Adrenal gland (tissue), 19 donors: ENCODE measurements at regions of chr12 and their contacts with region 1.

Region 1: GRCh38 chr12:64256166-64256800 is 34.2 kb upstream of the KICS2 start:
- DNase-seq: no peak
- H3K4me3 ChIP-seq: no peak overlapping the region
- H3K27ac ChIP-seq: no peak overlapping the region
- H3K4me1 ChIP-seq: peaks cover 6 to 12% of the 10 kb centered on the region in 2 donors
- H3K27me3 ChIP-seq: no peaks in the 10 kb centered on the region
- CTCF ChIP-seq: peak; percentile 66 to 88 (median 84)
- POLR2A ChIP-seq: no peak

Region 2: GRCh38 chr12:63836936-63837335 is 419.3 kb before region 1 on chr12:
- intact Hi-C with region 1: loop called (anchors 2 to 5 kb)
- DNase-seq: no peak
- H3K4me3 ChIP-seq: no peak overlapping the region
- H3K27ac ChIP-seq: no peak overlapping the region
- H3K4me1 ChIP-seq: no peaks in the 10 kb centered on the region
- H3K27me3 ChIP-seq: no peaks in the 10 kb centered on the region
- CTCF ChIP-seq: no peak
- POLR2A ChIP-seq: no peak

Region 3: DNA sequence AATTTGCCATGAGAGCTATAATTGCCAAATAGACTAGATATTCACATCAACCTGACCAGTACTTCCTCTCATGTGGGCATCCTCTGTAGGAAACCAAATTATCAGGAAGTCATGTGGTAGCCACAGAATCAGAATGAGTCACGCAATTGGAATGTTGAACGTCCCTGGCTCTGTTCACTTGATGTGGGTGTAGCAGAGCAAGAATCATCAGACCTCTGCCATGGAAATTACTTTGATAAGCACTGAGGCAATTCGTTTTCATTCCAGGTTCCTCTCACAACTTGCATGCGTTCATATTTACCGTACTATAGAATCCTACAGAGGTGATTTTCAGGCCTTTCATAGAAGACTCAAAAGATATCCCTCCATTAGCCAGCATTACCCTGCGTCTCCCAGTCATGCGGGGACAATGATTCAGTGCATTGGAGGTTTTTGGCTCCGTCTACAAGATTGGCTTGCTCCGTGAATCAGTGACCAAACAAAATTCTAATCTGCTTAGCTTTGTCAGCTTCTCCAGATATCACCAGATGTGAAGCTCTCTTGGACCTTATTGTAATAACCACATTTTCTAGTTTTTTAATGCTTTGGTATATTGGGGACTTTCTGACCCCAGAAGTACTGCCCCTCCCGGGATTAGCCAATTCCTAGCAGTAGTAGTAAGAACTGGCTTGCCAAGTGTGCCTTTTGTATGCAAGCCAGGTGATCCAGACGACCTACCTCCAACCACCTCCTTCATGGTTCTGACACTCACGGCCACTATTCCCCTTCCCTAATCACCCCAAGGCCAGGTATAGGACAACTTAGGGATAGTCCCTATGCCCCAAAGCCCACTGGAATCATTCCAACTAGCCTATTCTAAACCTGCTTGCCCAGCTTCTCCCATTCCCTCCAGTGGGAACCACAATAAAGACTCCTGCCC is 167.6 kb before region 1 on chr12:
- intact Hi-C with region 1: loop called in 1 of 2 experiments (anchors 10 kb)
- DNase-seq: peak; percentile 77 to 96 (median 89)
- H3K4me3 ChIP-seq: peak overlapping the region in 1 of 4 donors; percentile 28
- H3K27ac ChIP-seq: peak overlapping the region; percentile 78 to 97 (median 88)
- H3K4me1 ChIP-seq: peaks cover 9 to 47% of the 10 kb centered on the region in 2 donors
- H3K27me3 ChIP-seq: no peaks in the 10 kb centered on the region
- CTCF ChIP-seq: no peak
- POLR2A ChIP-seq: peak in 1 of 2 donors; percentile 72